IMR-90 (cell line): ENCODE measurements at regions of chr12 and their contacts with region 1.

Region 1: DNA sequence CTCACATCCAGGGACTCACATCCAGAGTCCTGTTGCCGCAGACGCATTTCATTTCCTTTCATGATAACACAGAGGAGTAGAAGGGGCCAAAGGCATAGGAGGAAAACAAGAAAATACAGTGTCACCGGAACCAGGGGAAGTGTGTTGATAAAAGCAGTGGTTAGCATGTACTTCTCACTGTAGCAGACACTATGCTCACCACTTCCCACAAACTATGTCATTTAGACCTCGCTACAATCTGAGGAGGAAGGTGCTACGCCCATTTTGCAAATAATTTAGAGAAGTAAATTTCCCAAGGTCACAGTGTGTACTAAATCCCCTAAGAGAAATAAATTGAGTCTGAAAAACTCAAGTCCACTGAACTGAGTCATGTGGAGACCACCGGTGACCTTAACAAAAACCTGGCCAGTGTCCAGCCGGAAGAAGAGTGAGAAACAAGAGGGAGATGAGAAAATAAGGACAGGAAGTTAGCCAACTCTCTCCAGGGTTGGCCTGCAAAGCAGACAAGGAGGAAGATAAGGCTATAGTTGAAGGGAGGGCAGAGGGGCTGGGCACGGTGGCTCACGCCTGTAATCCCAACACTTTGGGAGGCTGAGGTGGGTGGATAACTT is 25.8 kb upstream of the TMCC3 start:
- DNase-seq: no peak
- ATAC-seq: no peak
- H3K4me3 ChIP-seq: no peak overlapping the region
- H3K27ac ChIP-seq: no peak overlapping the region
- H3K4me1 ChIP-seq: no peaks in the 10 kb centered on the region
- H3K27me3 ChIP-seq: peaks cover 3% of the 10 kb centered on the region
- CTCF ChIP-seq: no peak
- POLR2A ChIP-seq: no peak
- RAD21 ChIP-seq: no peak

Region 2: GRCh38 chr12:93699271-93700145 is 976.6 kb before region 1 on chr12:
- CTCF ChIA-PET with region 1: no interaction called
- POLR2A ChIA-PET with region 1: no interaction called
- dilution Hi-C with region 1: no loop called
- in situ Hi-C with region 1: no loop called
- intact Hi-C with region 1: no loop called
- DNase-seq: peak; percentile 93
- ATAC-seq: peak; percentile 79
- H3K4me3 ChIP-seq: no peak overlapping the region
- H3K27ac ChIP-seq: no peak overlapping the region
- H3K4me1 ChIP-seq: peaks cover 16% of the 10 kb centered on the region
- H3K27me3 ChIP-seq: no peaks in the 10 kb centered on the region
- CTCF ChIP-seq: no peak
- POLR2A ChIP-seq: no peak
- RAD21 ChIP-seq: no peak

Region 3: DNA sequence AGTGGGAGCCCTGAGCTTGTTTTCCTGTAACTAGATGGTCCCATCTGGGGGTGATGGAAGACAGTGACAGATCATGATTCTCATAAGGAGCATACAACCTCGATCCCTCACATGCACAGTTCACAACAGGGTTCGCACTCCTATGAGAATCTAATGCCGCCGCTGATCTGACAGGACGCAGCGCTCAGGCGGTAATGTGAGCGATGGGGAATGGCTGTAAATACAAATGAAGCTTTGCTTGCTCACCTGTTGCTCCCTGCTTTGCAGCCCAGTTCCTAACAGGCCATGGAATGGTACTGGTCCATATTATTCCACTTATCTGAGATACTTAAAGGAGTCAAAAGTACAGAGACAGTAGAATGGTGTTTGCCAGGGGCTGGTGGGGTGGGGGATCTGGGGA is 206.6 kb before region 1 on chr12:
- CTCF ChIA-PET with region 1: no interaction called
- POLR2A ChIA-PET with region 1: no interaction called
- dilution Hi-C with region 1: no loop called
- in situ Hi-C with region 1: no loop called
- intact Hi-C with region 1: no loop called
- DNase-seq: no peak
- ATAC-seq: no peak
- H3K4me3 ChIP-seq: no peak overlapping the region
- H3K27ac ChIP-seq: no peak overlapping the region
- H3K4me1 ChIP-seq: no peaks in the 10 kb centered on the region
- H3K27me3 ChIP-seq: no peaks in the 10 kb centered on the region; the same call in none of the 2 replicates
- CTCF ChIP-seq: no peak
- POLR2A ChIP-seq: no peak
- RAD21 ChIP-seq: no peak

Region 4: GRCh38 chr12:94649349-94650142 is 26.6 kb before region 1 on chr12:
- CTCF ChIA-PET with region 1: no interaction called
- POLR2A ChIA-PET with region 1: no interaction called
- dilution Hi-C with region 1: no loop called
- in situ Hi-C with region 1: no loop called
- intact Hi-C with region 1: loop called (anchors 1 kb)
- DNase-seq: peak; percentile 4
- ATAC-seq: peak; percentile 59
- H3K4me3 ChIP-seq: peak overlapping the region; percentile 24
- H3K27ac ChIP-seq: no peak overlapping the region
- H3K4me1 ChIP-seq: no peaks in the 10 kb centered on the region
- H3K27me3 ChIP-seq: peaks cover 34% of the 10 kb centered on the region
- CTCF ChIP-seq: peak; percentile 14; the same call in 1 of the 2 replicates
- POLR2A ChIP-seq: no peak
- RAD21 ChIP-seq: no peak

Region 5: GRCh38 chr12:94969424-94969823 is 293.3 kb after region 1 on chr12:
- CTCF ChIA-PET with region 1: no interaction called
- POLR2A ChIA-PET with region 1: no interaction called
- dilution Hi-C with region 1: no loop called
- in situ Hi-C with region 1: no loop called
- intact Hi-C with region 1: no loop called
- DNase-seq: no peak
- ATAC-seq: no peak
- H3K4me3 ChIP-seq: no peak overlapping the region
- H3K27ac ChIP-seq: no peak overlapping the region
- H3K4me1 ChIP-seq: no peaks in the 10 kb centered on the region
- H3K27me3 ChIP-seq: no peaks in the 10 kb centered on the region
- CTCF ChIP-seq: no peak
- POLR2A ChIP-seq: no peak
- RAD21 ChIP-seq: no peak